Calu3 (cell line): ENCODE measurements at regions of chr2 and their contacts with region 1.

Region 1: GRCh38 chr2:15965564-15966019 is 25.2 kb downstream of the MYCN start:
- DNase-seq: no peak
- H3K4me3 Mint-ChIP-seq: no peak overlapping the region
- H3K27ac Mint-ChIP-seq: no peak overlapping the region
- H3K4me1 Mint-ChIP-seq: peaks cover 47% of the 10 kb centered on the region
- H3K27me3 Mint-ChIP-seq: no peaks in the 10 kb centered on the region
- CTCF ChIP-seq: no peak

Region 2: DNA sequence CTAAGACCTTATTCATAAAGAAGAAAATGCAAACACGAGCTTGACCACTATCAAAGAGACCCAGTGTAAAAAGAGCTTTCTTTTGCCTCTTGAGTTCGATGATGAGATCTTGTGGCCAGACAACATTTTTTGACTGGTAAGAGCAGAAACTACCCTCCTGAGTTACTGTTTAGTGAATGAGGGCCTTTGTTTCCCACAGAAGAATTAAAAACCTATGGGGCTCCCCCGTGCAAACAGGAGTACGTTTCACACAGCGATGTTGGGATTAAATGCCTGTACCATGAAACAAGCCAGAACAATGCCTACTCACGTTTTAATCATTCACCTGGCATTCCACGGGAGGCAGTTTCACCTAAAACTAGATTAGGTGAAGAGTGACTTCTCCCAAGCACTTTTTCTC is 10.8 kb after region 1 on chr2:
- CTCF ChIA-PET with region 1: interaction called, 4 read pairs
- intact Hi-C with region 1: loop called (anchors 1 kb)
- DNase-seq: peak; percentile 62
- H3K4me3 Mint-ChIP-seq: no peak overlapping the region
- H3K27ac Mint-ChIP-seq: peak overlapping the region; percentile 75
- H3K4me1 Mint-ChIP-seq: peaks cover 47% of the 10 kb centered on the region
- H3K27me3 Mint-ChIP-seq: no peaks in the 10 kb centered on the region
- CTCF ChIP-seq: no peak

Region 3: GRCh38 chr2:16005816-16006536 is 40.4 kb after region 1 on chr2:
- CTCF ChIA-PET with region 1: interaction called, 4 read pairs
- intact Hi-C with region 1: loop called (anchors 5 kb)
- DNase-seq: peak; percentile 65
- H3K4me3 Mint-ChIP-seq: no peak overlapping the region
- H3K27ac Mint-ChIP-seq: peak overlapping the region; percentile 83
- H3K4me1 Mint-ChIP-seq: peaks cover 19% of the 10 kb centered on the region
- H3K27me3 Mint-ChIP-seq: no peaks in the 10 kb centered on the region
- CTCF ChIP-seq: no peak

Region 4: DNA sequence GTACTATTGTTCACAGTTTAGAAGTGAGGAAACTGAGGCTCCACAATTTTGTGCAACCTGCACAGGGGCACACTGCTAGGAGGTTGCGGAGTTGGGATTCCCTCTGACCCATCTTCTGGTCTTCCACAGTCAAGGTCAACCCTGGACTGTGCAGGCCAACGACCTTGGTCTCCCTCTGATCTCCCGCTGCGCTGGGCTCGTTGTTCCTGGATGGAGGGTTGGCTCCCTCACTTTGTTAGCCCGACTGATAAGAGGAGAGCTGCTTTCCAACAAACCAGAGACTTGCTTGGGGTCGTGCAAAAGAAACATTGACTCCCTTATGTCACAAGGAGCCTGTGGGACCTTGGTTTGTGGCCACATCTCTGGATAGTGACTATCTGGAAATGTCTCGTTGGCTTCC is 162.4 kb after region 1 on chr2:
- CTCF ChIA-PET with region 1: no interaction called
- intact Hi-C with region 1: no loop called
- DNase-seq: no peak
- H3K4me3 Mint-ChIP-seq: no peak overlapping the region
- H3K27ac Mint-ChIP-seq: no peak overlapping the region
- H3K4me1 Mint-ChIP-seq: peaks cover 30% of the 10 kb centered on the region
- H3K27me3 Mint-ChIP-seq: no peaks in the 10 kb centered on the region
- CTCF ChIP-seq: no peak

Region 5: DNA sequence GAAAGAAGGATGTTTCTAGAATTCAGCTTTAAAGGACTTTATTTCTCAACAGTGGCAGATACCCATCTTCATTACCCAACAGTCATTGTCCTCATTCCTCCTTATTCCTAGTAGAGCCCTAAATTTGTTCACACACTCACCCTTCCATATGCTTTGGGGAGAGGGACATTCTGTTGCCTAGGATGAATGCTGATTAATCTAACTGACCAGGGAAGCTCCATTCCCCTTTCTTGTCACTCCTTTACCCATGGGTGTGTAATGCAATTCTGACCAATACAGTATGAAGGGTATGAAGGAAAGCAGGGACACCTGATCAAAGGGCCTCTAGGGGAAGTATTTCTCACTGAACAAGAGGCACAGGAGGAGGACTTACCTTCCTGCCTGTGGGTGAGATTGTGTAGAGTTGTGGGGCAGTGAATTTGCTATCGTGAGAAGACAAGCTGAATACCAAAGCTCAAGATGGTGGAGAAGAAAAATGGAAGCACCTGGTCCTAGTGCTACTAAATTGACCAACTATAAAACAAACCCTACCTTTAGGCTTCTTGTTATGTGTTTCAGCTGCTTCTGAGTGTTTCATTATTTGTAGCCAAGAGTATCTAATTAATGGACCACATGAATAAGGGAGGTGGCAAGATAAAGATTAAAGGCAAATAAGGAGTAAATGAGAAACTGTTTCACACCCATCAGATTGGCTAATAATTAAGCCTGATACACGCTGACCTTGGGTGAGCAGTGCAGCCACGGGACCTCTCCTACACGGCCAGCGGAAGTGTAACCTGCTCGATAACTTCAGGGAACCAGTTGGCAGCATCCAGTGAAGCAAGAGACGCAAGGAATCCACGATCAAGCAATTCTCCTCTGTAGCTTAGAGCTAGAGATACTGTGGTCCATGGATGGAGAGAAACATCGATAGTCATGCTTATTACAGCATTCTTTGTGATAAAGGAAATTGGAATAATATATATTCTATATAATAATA is 177.1 kb after region 1 on chr2:
- CTCF ChIA-PET with region 1: no interaction called
- intact Hi-C with region 1: loop called (anchors 5 kb)
- DNase-seq: peak; percentile 78
- H3K4me3 Mint-ChIP-seq: peak overlapping the region; percentile 8
- H3K27ac Mint-ChIP-seq: peak overlapping the region; percentile 76
- H3K4me1 Mint-ChIP-seq: peaks cover 25% of the 10 kb centered on the region
- H3K27me3 Mint-ChIP-seq: no peaks in the 10 kb centered on the region
- CTCF ChIP-seq: no peak